ENCODE measurements at regions of chr16 and their contacts with region 1.

Region 1: DNA sequence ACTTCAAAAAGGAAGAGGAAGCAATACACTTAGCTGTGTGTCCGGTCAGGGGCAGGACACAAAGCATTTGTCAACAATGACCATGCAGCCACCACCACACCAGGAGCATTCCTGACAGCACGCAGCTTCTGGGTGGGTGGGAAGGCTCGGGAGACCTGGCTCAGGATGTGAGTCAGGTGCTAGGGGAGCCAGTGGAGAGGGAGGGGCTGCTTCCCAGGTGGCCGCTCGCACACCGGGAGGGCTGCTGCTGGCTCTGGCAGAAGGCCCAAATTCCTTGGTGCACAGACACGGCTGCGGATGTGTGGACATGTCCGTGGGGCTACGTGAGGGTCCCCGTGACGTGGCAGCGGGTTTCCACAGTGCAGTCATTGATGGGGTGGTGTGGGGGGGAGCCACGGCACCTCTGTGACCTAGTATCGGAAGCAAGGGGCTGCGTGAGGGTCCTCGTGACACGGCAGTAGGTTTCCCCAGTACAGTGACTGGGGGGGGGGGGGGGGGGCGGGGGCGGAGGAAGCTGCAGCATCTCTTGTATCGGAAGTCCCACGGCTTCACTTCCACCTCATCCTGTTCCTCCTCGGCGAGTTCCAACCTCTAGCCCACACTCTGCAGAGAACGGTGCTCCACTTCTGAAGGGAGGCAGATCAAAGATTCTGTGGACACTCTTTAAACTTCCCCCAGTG is 112.8 kb downstream of the ZNF778 start:
- DNase-seq: peak in 3 of 5 donors; percentile 49 to 63 (median 57)
- ATAC-seq: peak in 3 of 4 donors; percentile 13 to 47 (median 15)
- H3K4me3 ChIP-seq: peak overlapping the region in 4 of 12 donors; percentile 7 to 24 (median 20)
- H3K27ac ChIP-seq: peak overlapping the region in 11 of 12 donors; percentile 11 to 62 (median 58)
- H3K4me1 ChIP-seq: peaks cover 20 to 87% (median 66%) of the 10 kb centered on the region in 12 donors
- H3K27me3 ChIP-seq: no peaks in the 10 kb centered on the region
- CTCF ChIP-seq: no peak
- POLR2A ChIP-seq: no peak

Region 2: DNA sequence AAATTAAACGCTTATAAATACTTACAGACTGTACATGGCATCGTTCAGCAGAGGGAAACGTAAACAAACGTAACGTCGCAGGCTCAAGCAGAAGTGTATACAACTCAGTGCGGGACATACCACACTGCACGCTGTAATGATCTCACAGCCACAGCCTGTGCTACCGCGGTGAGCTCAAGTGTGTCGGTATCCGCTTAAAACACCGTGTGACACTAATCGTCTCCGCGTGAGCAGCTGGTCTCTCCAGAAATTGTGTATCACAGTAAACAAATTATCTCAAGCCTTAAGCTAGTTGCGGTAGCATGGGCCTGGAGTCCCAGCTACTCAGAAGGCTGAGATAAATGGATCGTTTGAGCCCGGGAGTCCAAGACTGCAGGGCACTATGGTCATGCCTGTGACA is 44.7 kb after region 1 on chr16:
- intact Hi-C with region 1: loop called in 2 of 10 experiments (anchors 5 to 10 kb)
- DNase-seq: no peak
- ATAC-seq: no peak
- H3K4me3 ChIP-seq: no peak overlapping the region
- H3K27ac ChIP-seq: peak overlapping the region in 1 of 12 donors; percentile 36
- H3K4me1 ChIP-seq: peaks cover 4 to 77% (median 38%) of the 10 kb centered on the region in 12 donors
- H3K27me3 ChIP-seq: no peaks in the 10 kb centered on the region
- CTCF ChIP-seq: no peak
- POLR2A ChIP-seq: no peak

Region 3: GRCh38 chr16:89410794-89411309 is 80.5 kb after region 1 on chr16:
- intact Hi-C with region 1: no loop called
- DNase-seq: peak; percentile 55 to 75 (median 65)
- ATAC-seq: peak; percentile 71 to 83 (median 78)
- H3K4me3 ChIP-seq: no peak overlapping the region
- H3K27ac ChIP-seq: peak overlapping the region in 4 of 12 donors; percentile 5 to 49 (median 38)
- H3K4me1 ChIP-seq: peaks cover 20 to 94% (median 84%) of the 10 kb centered on the region in 12 donors
- H3K27me3 ChIP-seq: no peaks in the 10 kb centered on the region
- CTCF ChIP-seq: peak in 3 of 12 donors; percentile 12 to 33 (median 18)
- POLR2A ChIP-seq: no peak

Region 4: GRCh38 chr16:89490387-89491237 is 160.3 kb after region 1 on chr16 and contains the start of gene ANKRD11:
- intact Hi-C with region 1: loop called in 5 of 10 experiments (anchors 1 to 5 kb)
- DNase-seq: peak; percentile 99 to 100 (median 99)
- ATAC-seq: peak; percentile 96 to 100 (median 99)
- H3K4me3 ChIP-seq: peak within 1 kb of the TSS; percentile 73 to 100 (median 89)
- H3K27ac ChIP-seq: peak within 1 kb of the TSS; percentile 92 to 98 (median 95)
- H3K4me1 ChIP-seq: peaks cover 4 to 49% (median 42%) of the 10 kb centered on the region in 12 donors
- H3K27me3 ChIP-seq: no peaks in the 10 kb centered on the region
- CTCF ChIP-seq: peak in 1 of 12 donors; percentile 7
- POLR2A ChIP-seq: peak; percentile 63 to 85
- total RNA-seq, gene ANKRD11: 53.6 to 123 (median 67.7) TPM

Region 5: DNA sequence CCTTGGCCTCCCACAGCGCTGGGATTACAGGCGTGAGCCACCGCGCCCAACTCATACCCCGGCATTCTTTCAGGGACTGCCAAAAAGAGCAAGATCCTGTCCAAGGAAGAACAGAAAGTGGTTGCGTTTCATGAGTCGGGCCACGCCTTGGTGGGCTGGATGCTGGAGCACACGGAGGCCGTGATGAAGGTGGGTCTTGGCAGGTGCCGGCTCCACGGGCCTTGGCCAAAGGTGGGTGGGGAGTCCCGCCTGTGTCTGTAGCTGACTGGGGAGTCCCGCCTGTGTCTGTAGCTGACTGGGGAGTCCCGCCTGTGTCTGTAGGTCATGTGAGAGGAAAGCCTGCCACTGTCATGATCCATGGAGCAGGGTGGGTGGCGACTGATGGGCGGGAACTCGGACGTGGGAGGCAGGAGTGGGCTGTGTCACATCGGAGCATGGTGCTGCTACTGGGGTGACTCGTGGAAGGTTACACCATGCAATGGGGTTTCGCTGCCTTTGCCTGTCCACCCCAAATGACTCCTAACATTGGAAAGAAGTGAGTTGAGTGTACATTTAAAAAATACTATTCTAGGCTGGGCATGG is 220.2 kb after region 1 on chr16:
- intact Hi-C with region 1: loop called in 6 of 10 experiments (anchors 5 kb)
- DNase-seq: peak in 1 of 5 donors; percentile 14
- ATAC-seq: no peak
- H3K4me3 ChIP-seq: no peak overlapping the region
- H3K27ac ChIP-seq: no peak overlapping the region
- H3K4me1 ChIP-seq: no peaks in the 10 kb centered on the region
- H3K27me3 ChIP-seq: no peaks in the 10 kb centered on the region
- CTCF ChIP-seq: no peak
- POLR2A ChIP-seq: no peak

Region 6: GRCh38 chr16:89633064-89633631 is 302.8 kb after region 1 on chr16:
- intact Hi-C with region 1: loop called in 1 of 10 experiments (anchors 10 kb)
- DNase-seq: no peak
- ATAC-seq: no peak
- H3K4me3 ChIP-seq: no peak overlapping the region
- H3K27ac ChIP-seq: no peak overlapping the region
- H3K4me1 ChIP-seq: no peaks in the 10 kb centered on the region
- H3K27me3 ChIP-seq: peaks cover 0 to 31% (median 15%) of the 10 kb centered on the region in 9 donors
- CTCF ChIP-seq: no peak
- POLR2A ChIP-seq: no peak

Measured in heart left ventricle (tissue), 16 donors.